Motor neuron (in vitro differentiated cells): ENCODE measurements at regions of chr1 and their contacts with region 1.

Region 1: GRCh38 chr1:157073944-157074767 is 25.5 kb downstream of the ETV3L start:
- ATAC-seq: peak in 3 of 8 experiments; percentile 66 to 81 (median 68)
- H3K4me3 ChIP-seq: no peak overlapping the region
- H3K27ac ChIP-seq: no peak overlapping the region
- H3K4me1 ChIP-seq: no peaks in the 10 kb centered on the region

Region 2: DNA sequence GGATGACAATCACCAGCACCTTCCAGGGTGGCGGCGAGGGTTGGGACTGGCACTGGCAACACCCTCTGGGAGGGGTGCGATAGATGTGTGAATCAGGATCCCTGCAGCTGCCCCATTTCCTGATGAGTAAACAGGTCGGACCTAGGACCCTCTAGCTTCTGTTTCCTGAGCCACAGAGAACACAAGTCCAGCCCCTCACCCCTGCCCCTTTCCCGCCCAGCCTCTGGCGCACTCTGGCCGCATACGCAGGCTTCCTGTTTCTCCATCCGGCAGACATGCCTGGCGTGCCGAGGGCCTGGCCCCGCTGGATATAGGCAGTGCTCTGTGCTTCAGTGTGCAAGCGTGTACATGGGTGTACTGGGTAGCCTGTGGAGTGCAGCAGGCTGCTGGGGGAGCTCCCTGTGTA is 176.0 kb before region 1 on chr1:
- in situ Hi-C with region 1: no loop called
- ATAC-seq: peak in 7 of 8 experiments; percentile 3 to 64 (median 55)
- H3K4me3 ChIP-seq: no peak overlapping the region
- H3K27ac ChIP-seq: no peak overlapping the region
- H3K4me1 ChIP-seq: peaks cover 0 to 24% of the 10 kb centered on the region in 2 donors

Region 3: DNA sequence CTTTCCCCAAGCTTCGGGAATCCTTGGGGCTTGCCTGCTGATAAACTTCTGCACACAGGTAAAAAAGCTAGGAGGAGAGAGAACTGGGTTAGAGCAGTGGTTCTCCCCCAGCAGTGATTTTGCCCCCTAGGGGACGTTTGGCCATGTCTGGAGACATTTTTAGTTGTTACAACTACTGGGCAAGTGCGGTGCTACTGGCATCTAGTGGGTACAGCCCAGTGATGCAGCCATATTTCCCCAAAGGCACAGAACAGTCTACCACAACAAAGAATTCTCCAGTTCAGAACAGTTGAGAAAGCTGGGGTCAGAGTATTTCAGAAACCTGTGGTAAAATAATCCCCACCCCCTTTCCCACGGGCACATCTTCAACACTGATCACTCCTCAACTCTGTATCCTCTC is 112.4 kb before region 1 on chr1:
- in situ Hi-C with region 1: loop called in 1 of 9 experiments (anchors 25 kb)
- ATAC-seq: peak in 1 of 8 experiments; percentile 45
- H3K4me3 ChIP-seq: no peak overlapping the region
- H3K27ac ChIP-seq: no peak overlapping the region
- H3K4me1 ChIP-seq: no peaks in the 10 kb centered on the region

Region 4: DNA sequence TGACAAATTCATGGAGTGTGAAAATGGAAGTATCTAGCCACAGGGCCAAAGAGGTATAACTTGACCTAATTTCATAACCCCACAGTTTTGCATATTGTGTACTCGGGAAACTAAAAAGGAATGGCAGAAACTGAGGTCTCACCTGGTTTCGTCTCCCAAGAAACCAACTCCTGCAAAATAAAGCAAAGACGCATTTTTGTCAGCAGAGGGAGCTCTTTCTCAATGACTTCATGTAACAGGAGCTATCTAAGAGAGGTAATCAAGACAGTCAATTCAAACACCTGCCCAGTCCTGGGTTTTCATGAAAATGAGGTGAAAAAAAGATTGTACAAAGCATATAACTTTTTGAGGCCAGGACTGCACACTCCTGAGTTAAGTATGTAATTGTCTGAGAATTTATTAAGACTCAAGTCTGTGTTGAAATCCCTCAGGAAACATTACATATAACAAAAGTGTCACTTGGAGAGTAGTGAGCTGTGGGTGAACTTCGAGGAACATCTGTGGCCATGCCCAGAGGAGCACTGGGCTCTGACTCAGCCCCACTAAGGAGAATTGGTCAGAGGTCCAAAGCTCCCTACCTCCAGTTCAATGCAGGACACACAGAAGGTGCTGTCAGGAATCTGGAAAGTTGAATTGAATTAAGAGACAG is 506.1 kb after region 1 on chr1:
- in situ Hi-C with region 1: no loop called
- ATAC-seq: peak in 7 of 8 experiments; percentile 39 to 71 (median 55)
- H3K4me3 ChIP-seq: no peak overlapping the region
- H3K27ac ChIP-seq: no peak overlapping the region
- H3K4me1 ChIP-seq: peaks cover 2% of the 10 kb centered on the region in 2 donors